CD4-positive, alpha-beta T cell (primary cell): ENCODE measurements at regions of chr1 and their contacts with region 1.

Region 1: GRCh38 chr1:55215256-55216021 is at the start of gene USP24:
- DNase-seq: peak; percentile 74 to 94 (median 83)
- ATAC-seq: peak; percentile 81
- H3K4me3 ChIP-seq: peak within 1 kb of the TSS; percentile 86
- H3K4me3 Mint-ChIP-seq: peak within 1 kb of the TSS; percentile 95
- H3K27ac ChIP-seq: peak within 1 kb of the TSS; percentile 85 to 91
- H3K27ac Mint-ChIP-seq: peak within 1 kb of the TSS; percentile 89
- H3K4me1 ChIP-seq: peaks cover 38% of the 10 kb centered on the region
- H3K4me1 Mint-ChIP-seq: peaks cover 68% of the 10 kb centered on the region
- H3K27me3 ChIP-seq: no peaks in the 10 kb centered on the region
- H3K27me3 Mint-ChIP-seq: no peaks in the 10 kb centered on the region
- CTCF ChIP-seq: no peak
- total RNA-seq, gene USP24: 68.6 to 76.3 TPM

Region 2: GRCh38 chr1:54624466-54625464 is 590.7 kb before region 1 on chr1:
- CTCF ChIA-PET with region 1: no interaction called
- POLR2A ChIA-PET with region 1: no interaction called
- intact Hi-C with region 1: no loop called
- DNase-seq: no peak
- ATAC-seq: no peak
- H3K4me3 ChIP-seq: no peak overlapping the region
- H3K4me3 Mint-ChIP-seq: no peak overlapping the region
- H3K27ac ChIP-seq: no peak overlapping the region
- H3K27ac Mint-ChIP-seq: no peak overlapping the region
- H3K4me1 ChIP-seq: no peaks in the 10 kb centered on the region
- H3K4me1 Mint-ChIP-seq: no peaks in the 10 kb centered on the region
- H3K27me3 ChIP-seq: peaks cover 0 to 4% of the 10 kb centered on the region in 2 experiments
- H3K27me3 Mint-ChIP-seq: no peaks in the 10 kb centered on the region
- CTCF ChIP-seq: no peak

Region 3: DNA sequence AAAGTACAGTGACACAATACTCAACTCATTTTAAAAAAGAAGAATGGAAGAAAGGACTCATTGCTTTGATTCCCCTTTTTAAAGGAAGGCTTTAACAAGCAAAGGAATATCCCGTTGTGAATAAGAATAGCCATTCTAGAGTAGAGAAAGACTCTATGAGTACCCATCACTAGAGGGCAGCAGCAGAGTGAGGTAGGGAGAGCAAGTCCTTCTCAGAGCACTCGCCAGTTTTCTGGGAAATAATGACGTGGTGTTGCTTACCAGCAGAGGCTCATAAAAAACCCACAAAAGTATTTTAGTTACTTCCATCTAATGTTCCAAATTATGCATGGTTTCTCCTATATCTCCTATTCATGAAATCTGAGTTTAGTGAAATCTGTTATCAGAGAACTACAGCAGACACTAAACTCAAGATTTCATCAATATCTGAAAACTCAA is 74.9 kb before region 1 on chr1:
- CTCF ChIA-PET with region 1: no interaction called
- POLR2A ChIA-PET with region 1: interaction called, 3 read pairs
- intact Hi-C with region 1: loop called in 1 of 2 experiments (anchors 2 kb)
- DNase-seq: peak; percentile 26 to 90 (median 58)
- ATAC-seq: peak; percentile 94
- H3K4me3 ChIP-seq: no peak overlapping the region
- H3K4me3 Mint-ChIP-seq: no peak overlapping the region
- H3K27ac ChIP-seq: peak overlapping the region in 1 of 2 donors; percentile 7
- H3K27ac Mint-ChIP-seq: peak overlapping the region; percentile 70
- H3K4me1 ChIP-seq: no peaks in the 10 kb centered on the region
- H3K4me1 Mint-ChIP-seq: peaks cover 10% of the 10 kb centered on the region
- H3K27me3 ChIP-seq: no peaks in the 10 kb centered on the region
- H3K27me3 Mint-ChIP-seq: no peaks in the 10 kb centered on the region
- CTCF ChIP-seq: peak; percentile 88

Region 4: GRCh38 chr1:55179177-55179835 is 36.1 kb before region 1 on chr1:
- CTCF ChIA-PET with region 1: no interaction called
- POLR2A ChIA-PET with region 1: interaction called, 3 read pairs
- intact Hi-C with region 1: loop called (anchors 2 to 5 kb)
- DNase-seq: no peak
- ATAC-seq: no peak
- H3K4me3 ChIP-seq: no peak overlapping the region
- H3K4me3 Mint-ChIP-seq: no peak overlapping the region
- H3K27ac ChIP-seq: no peak overlapping the region
- H3K27ac Mint-ChIP-seq: peak overlapping the region; percentile 1
- H3K4me1 ChIP-seq: peaks cover 5% of the 10 kb centered on the region
- H3K4me1 Mint-ChIP-seq: peaks cover 44% of the 10 kb centered on the region
- H3K27me3 ChIP-seq: no peaks in the 10 kb centered on the region
- H3K27me3 Mint-ChIP-seq: no peaks in the 10 kb centered on the region
- CTCF ChIP-seq: no peak

Region 5: DNA sequence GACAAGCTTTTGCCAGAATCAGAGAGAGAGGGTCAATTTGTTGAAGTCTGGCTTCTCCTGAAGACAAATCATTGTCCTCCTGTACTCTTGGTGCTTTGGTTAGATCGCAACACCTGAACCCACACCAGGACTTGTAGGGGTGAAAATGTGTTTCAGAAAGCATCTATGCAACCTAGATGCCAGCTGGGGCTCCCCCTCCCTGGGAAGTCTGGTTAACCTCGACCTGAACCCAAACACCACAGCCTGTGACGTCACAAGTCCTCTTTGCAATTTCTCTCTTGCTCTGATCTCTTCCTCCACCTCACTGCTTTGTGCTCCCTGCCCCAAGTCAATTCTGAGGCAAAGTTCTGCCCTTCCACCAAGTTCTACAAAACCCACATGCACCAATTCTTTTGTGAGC is 42.5 kb after region 1 on chr1:
- CTCF ChIA-PET with region 1: no interaction called
- POLR2A ChIA-PET with region 1: no interaction called
- intact Hi-C with region 1: loop called (anchors 5 kb)
- DNase-seq: peak; percentile 19 to 85 (median 44)
- ATAC-seq: peak; percentile 99
- H3K4me3 ChIP-seq: no peak overlapping the region
- H3K4me3 Mint-ChIP-seq: peak overlapping the region; percentile 0
- H3K27ac ChIP-seq: no peak overlapping the region
- H3K27ac Mint-ChIP-seq: peak overlapping the region; percentile 55
- H3K4me1 ChIP-seq: peaks cover 8% of the 10 kb centered on the region
- H3K4me1 Mint-ChIP-seq: peaks cover 12% of the 10 kb centered on the region
- H3K27me3 ChIP-seq: no peaks in the 10 kb centered on the region
- H3K27me3 Mint-ChIP-seq: no peaks in the 10 kb centered on the region
- CTCF ChIP-seq: no peak

Region 6: DNA sequence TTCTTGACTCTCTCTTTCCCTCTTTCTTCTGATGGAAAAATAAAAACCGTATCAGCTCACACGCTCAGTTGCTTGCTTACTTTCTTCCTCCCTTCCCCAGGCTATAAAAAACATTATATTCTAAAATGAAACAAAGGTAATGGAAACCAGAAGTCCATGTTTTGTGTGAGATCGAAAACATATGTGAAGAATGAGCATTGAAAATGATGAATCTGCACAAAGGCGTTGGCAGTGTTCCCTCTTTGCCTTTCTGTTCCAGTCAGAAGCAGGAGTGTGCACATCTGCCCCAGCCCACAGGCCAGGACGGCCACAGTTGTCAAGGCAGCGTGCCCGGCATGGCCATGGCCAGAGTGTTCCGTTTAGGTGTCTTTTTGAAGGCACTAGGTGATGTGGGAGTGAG is 185.1 kb after region 1 on chr1:
- CTCF ChIA-PET with region 1: no interaction called
- POLR2A ChIA-PET with region 1: no interaction called
- intact Hi-C with region 1: no loop called
- DNase-seq: no peak
- ATAC-seq: no peak
- H3K4me3 ChIP-seq: no peak overlapping the region
- H3K4me3 Mint-ChIP-seq: no peak overlapping the region
- H3K27ac ChIP-seq: no peak overlapping the region
- H3K27ac Mint-ChIP-seq: no peak overlapping the region
- H3K4me1 ChIP-seq: no peaks in the 10 kb centered on the region
- H3K4me1 Mint-ChIP-seq: no peaks in the 10 kb centered on the region
- H3K27me3 ChIP-seq: peaks cover 5 to 8% of the 10 kb centered on the region in 2 experiments
- H3K27me3 Mint-ChIP-seq: peaks cover 47% of the 10 kb centered on the region
- CTCF ChIP-seq: no peak